Activated CD4-positive, alpha-beta T cell treated with anti-CD3 and anti-CD28 coated beads, Interleukin-2, amount 10 ng/mL, durations not matched to agents 24 days and 14 days (primary cell): ENCODE measurements at regions of chr16 and their contacts with region 1.

Region 1: GRCh38 chr16:12535535-12536411 is 267.9 kb downstream of the CPPED1 start:
- DNase-seq: peak; percentile 89
- H3K4me3 Mint-ChIP-seq: peak overlapping the region; percentile 75
- H3K27ac Mint-ChIP-seq: peak overlapping the region; percentile 97
- H3K4me1 Mint-ChIP-seq: peaks cover 91% of the 10 kb centered on the region
- H3K27me3 Mint-ChIP-seq: no peaks in the 10 kb centered on the region

Region 2: GRCh38 chr16:12082226-12082887 is 453.4 kb before region 1 on chr16:
- intact Hi-C with region 1: loop called (anchors 2 kb)
- DNase-seq: peak; percentile 65
- H3K4me3 Mint-ChIP-seq: peak overlapping the region; percentile 11
- H3K27ac Mint-ChIP-seq: peak overlapping the region; percentile 83
- H3K4me1 Mint-ChIP-seq: peaks cover 44% of the 10 kb centered on the region
- H3K27me3 Mint-ChIP-seq: no peaks in the 10 kb centered on the region

Region 3: GRCh38 chr16:12546918-12547607 is 11.3 kb after region 1 on chr16:
- intact Hi-C with region 1: loop called (anchors 1 kb)
- DNase-seq: no peak
- H3K4me3 Mint-ChIP-seq: peak overlapping the region; percentile 56
- H3K27ac Mint-ChIP-seq: peak overlapping the region; percentile 86
- H3K4me1 Mint-ChIP-seq: peaks cover 69% of the 10 kb centered on the region
- H3K27me3 Mint-ChIP-seq: no peaks in the 10 kb centered on the region

Region 4: GRCh38 chr16:12613131-12613991 is 77.6 kb after region 1 on chr16:
- intact Hi-C with region 1: loop called (anchors 1 kb)
- DNase-seq: no peak
- H3K4me3 Mint-ChIP-seq: peak overlapping the region; percentile 21
- H3K27ac Mint-ChIP-seq: peak overlapping the region; percentile 76
- H3K4me1 Mint-ChIP-seq: peaks cover 21% of the 10 kb centered on the region
- H3K27me3 Mint-ChIP-seq: peaks cover 2% of the 10 kb centered on the region

Region 5: GRCh38 chr16:12750554-12750918 is 214.8 kb after region 1 on chr16:
- intact Hi-C with region 1: loop called (anchors 1 kb)
- DNase-seq: peak; percentile 56
- H3K4me3 Mint-ChIP-seq: peak overlapping the region; percentile 50
- H3K27ac Mint-ChIP-seq: peak overlapping the region; percentile 87
- H3K4me1 Mint-ChIP-seq: peaks cover 26% of the 10 kb centered on the region
- H3K27me3 Mint-ChIP-seq: no peaks in the 10 kb centered on the region

Region 6: DNA sequence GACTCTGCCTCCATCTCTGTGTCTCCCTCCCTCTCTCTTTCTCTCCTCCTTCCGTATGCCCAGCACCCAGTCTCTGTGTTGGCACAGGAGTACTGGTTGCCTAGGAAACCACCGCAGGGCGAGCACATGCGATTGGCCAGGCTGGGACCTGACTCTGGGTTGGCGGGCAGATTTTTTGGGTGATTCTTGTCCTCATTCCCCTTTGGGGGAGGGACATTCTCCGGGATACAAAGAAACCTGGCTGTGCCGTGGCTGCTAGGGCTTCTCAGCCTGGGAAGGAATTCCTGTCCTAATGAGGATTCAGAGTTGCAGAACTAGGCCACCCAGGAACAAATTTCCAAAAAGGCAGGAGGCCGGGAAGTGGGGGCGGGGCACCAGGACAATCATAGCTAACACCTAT is 534.5 kb after region 1 on chr16:
- intact Hi-C with region 1: no loop called
- DNase-seq: no peak
- H3K4me3 Mint-ChIP-seq: no peak overlapping the region
- H3K27ac Mint-ChIP-seq: no peak overlapping the region
- H3K4me1 Mint-ChIP-seq: no peaks in the 10 kb centered on the region
- H3K27me3 Mint-ChIP-seq: no peaks in the 10 kb centered on the region